Breast epithelium (tissue), 4 donors: ENCODE measurements at regions of chr3 and their contacts with region 1.

Region 1: DNA sequence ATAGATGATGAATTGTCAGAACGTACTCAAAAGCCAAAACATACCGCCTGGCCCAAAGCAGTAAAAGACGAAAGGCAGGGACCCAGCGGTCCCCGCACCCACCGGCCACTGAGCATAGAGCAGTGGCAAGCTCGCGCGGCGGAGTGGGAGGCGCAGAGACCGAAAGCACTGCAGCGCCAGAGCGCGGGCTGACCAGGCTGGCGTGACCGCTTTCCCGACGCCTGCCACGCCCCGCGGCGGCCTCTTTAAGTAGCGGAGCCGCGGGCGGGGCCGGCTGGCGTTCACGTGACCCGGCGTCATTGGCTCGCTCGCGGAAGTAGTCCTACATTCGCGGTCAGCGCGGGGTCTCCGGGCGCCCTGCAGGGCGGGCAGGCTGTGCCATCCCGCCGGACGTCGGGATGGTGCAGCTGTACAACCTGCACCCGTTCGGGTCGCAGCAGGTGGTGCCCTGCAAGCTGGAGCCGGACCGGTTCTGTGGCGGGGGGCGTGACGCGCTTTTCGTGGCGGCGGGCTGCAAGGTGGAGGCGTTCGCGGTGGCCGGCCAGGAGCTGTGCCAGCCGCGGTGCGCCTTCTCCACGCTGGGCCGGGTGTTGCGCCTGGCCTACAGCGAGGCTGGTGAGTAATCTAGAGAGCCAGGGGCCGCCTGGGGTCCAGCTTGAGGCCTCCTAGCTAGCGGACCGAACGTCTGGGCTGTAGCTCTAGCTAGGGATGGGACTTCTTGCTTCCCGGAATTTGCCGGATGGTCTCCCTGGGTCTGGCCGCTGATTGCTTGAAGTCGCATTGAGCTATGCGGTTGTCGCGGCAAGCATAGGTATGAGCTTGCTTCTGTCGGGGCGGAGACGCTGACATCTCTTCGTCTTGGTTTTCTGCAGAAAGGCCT is at the start of gene HPS3:
- DNase-seq: peak; percentile 79 to 84
- H3K4me3 ChIP-seq: peak within 1 kb of the TSS; percentile 85 to 98 (median 91)
- H3K27ac ChIP-seq: peak within 1 kb of the TSS; percentile 85 to 88
- H3K4me1 ChIP-seq: peaks cover 0 to 10% of the 10 kb centered on the region in 2 donors
- H3K27me3 ChIP-seq: no peaks in the 10 kb centered on the region
- CTCF ChIP-seq: no peak
- POLR2A ChIP-seq: peak; percentile 76
- total RNA-seq, gene HPS3: 14.4 to 27.1 (median 26.2) TPM

Region 2: DNA sequence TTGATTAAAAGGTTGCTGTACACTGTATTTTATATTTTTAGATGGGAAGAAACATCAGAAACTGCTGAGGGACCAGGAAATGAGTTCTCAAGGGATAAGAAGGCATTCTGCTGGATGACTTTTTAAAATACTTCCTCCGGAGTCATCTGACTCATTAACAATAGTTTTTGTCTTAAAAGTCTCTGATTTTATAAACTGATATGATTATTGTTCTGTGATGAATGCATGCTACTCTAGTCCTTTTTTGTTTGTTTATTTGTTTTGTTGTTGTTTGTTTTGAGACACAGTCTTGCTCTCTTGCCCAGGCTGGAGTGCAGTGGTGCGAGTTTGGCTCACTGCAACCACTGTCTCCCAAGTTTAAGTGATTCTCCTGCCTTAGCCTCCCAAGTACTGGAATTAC is 25.1 kb before region 1 on chr3:
- intact Hi-C with region 1: no loop called
- DNase-seq: no peak
- H3K4me3 ChIP-seq: no peak overlapping the region
- H3K27ac ChIP-seq: no peak overlapping the region
- H3K4me1 ChIP-seq: no peaks in the 10 kb centered on the region
- H3K27me3 ChIP-seq: no peaks in the 10 kb centered on the region
- CTCF ChIP-seq: no peak
- POLR2A ChIP-seq: no peak

Region 3: GRCh38 chr3:149273096-149273751 is 143.7 kb after region 1 on chr3:
- intact Hi-C with region 1: loop called (anchors 10 kb)
- DNase-seq: no peak
- H3K4me3 ChIP-seq: no peak overlapping the region
- H3K27ac ChIP-seq: no peak overlapping the region
- H3K4me1 ChIP-seq: peaks cover 0 to 3% of the 10 kb centered on the region in 2 donors
- H3K27me3 ChIP-seq: no peaks in the 10 kb centered on the region
- CTCF ChIP-seq: peak; percentile 84 to 98 (median 95)
- POLR2A ChIP-seq: no peak